Activated naive CD4-positive, alpha-beta T cell treated with anti-CD3 and anti-CD28 coated beads, Interleukin-2, amount 10 ng/mL, durations not matched to agents 7 days and 5 days (primary cell): ENCODE measurements at regions of chr9 and their contacts with region 1.

Region 1: GRCh38 chr9:5186416-5187169 is 1.2 kb upstream of the INSL6 start:
- DNase-seq: peak; percentile 77
- H3K4me3 Mint-ChIP-seq: no peak overlapping the region
- H3K27ac Mint-ChIP-seq: no peak overlapping the region
- H3K4me1 Mint-ChIP-seq: peaks cover 11% of the 10 kb centered on the region
- H3K27me3 Mint-ChIP-seq: peaks cover 9% of the 10 kb centered on the region

Region 2: GRCh38 chr9:4762108-4762885 is 424.3 kb before region 1 on chr9:
- CTCF ChIA-PET with region 1: interaction called, 22 read pairs
- DNase-seq: peak; percentile 91
- H3K4me3 Mint-ChIP-seq: peak overlapping the region; percentile 34
- H3K27ac Mint-ChIP-seq: peak overlapping the region; percentile 6
- H3K4me1 Mint-ChIP-seq: peaks cover 22% of the 10 kb centered on the region
- H3K27me3 Mint-ChIP-seq: peaks cover 34% of the 10 kb centered on the region

Region 3: DNA sequence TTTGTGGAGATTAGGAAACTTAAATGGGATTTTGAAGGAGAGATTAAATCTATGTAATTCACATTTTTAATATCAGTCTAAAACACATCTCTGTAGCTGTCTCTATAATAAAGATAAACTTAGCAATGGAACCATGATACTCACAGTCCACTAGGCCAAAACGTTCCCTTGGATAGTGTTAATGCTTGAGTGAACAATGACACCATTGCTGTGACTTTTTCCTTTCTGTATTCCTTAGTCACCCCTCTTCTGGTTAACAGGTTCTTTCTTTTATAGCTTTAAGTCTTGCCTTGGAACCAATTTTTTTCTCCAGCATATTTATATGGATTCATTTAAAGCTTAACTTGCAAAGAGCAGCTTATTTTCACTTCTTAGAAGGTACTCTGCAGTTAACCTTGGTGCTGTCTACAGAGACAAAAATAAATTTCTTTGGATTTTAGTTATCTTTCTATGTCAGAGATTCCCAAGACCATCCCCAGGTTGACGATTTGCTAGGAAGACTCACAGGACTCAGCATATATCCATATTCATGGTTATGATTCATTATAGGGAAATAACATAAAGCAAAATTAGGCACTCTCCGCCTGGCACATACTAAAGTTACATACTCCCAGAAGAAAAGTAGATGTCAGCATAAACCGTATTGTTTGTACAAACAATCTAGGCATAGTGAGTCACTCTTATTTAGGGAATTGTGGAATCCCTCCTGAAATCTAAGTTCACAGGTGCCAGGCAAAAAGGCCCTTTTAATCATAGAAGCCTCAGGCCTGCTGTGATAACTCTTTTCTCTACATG is 64.3 kb before region 1 on chr9:
- CTCF ChIA-PET with region 1: no interaction called
- DNase-seq: no peak
- H3K4me3 Mint-ChIP-seq: no peak overlapping the region
- H3K27ac Mint-ChIP-seq: no peak overlapping the region
- H3K4me1 Mint-ChIP-seq: no peaks in the 10 kb centered on the region
- H3K27me3 Mint-ChIP-seq: no peaks in the 10 kb centered on the region

Region 4: DNA sequence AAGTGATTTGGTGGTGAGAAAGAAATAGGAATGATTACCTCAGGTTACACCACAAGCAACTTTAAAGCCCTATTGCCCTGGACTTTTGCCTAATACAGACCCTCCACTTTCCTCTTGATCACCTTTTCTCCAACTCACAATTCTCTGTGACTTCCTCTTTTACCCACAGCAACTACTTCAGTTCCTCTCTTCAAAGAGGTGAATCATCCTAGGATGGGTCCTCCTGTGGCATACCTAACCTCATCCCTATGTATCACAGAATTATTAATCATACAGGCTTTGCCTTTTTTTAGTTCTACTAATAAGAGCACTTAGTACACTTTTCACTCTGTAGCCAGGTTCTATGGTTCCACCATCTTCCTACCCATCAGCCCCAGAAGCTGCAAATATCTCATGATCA is 18.5 kb after region 1 on chr9:
- CTCF ChIA-PET with region 1: no interaction called
- DNase-seq: no peak
- H3K4me3 Mint-ChIP-seq: no peak overlapping the region
- H3K27ac Mint-ChIP-seq: no peak overlapping the region
- H3K4me1 Mint-ChIP-seq: peaks cover 12% of the 10 kb centered on the region
- H3K27me3 Mint-ChIP-seq: peaks cover 4% of the 10 kb centered on the region

Region 5: GRCh38 chr9:5425006-5425628 is 238.5 kb after region 1 on chr9:
- CTCF ChIA-PET with region 1: interaction called, 52 read pairs
- DNase-seq: no peak
- H3K4me3 Mint-ChIP-seq: no peak overlapping the region
- H3K27ac Mint-ChIP-seq: no peak overlapping the region
- H3K4me1 Mint-ChIP-seq: no peaks in the 10 kb centered on the region
- H3K27me3 Mint-ChIP-seq: no peaks in the 10 kb centered on the region

Region 6: DNA sequence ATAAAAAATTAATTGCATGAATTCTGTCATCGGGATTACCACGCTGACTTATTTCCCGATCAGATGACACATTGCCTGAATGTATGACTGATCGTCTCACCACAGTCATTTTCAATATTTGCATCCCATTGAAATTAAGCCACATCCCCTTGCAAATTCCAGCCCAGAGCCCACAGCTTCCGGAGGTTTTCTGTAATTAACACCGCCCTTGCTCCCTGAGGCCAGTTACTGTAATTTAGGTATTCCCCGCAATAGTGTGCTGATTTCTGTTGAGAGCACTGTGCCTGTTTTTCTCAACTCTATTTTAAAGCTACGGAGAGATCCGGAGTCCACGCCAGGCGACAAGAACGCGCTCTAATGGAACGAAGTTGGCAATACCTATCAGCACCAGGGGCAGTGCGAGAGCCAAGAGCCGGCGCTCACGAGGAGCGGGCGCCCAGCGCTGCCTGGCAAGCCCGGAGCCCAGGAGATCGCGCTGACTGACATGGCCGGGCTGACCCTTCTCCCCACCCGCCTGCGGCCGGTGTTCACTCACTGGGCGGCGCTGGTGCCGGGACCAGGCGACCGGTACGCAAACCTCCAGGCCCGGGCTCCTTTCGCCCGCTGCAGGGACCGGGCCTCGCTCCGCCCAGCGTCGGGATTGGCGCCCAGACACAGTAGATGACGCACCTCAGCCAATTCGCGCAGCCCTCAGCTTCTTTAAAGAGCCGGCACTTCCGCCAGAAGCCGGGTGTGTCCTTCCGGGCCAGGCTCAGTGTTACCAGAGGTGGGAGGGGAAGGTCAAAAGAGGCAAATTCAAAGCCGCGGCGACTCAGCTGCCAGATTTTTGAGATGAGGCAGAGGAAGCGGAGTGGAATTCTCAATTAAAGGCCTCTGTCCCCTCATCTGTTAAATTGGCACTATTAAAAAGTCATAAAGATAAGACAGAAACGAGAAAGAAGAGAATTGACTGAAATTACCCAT is 250.9 kb after region 1 on chr9 and contains the start of gene PLGRKT:
- CTCF ChIA-PET with region 1: interaction called, 45 read pairs
- DNase-seq: peak; percentile 95
- H3K4me3 Mint-ChIP-seq: peak within 1 kb of the TSS; percentile 94
- H3K27ac Mint-ChIP-seq: peak within 1 kb of the TSS; percentile 97
- H3K4me1 Mint-ChIP-seq: peaks cover 38% of the 10 kb centered on the region
- H3K27me3 Mint-ChIP-seq: no peaks in the 10 kb centered on the region

Region 7: GRCh38 chr9:5582835-5583195 is 396.2 kb after region 1 on chr9:
- CTCF ChIA-PET with region 1: interaction called, 38 read pairs
- DNase-seq: peak; percentile 66
- H3K4me3 Mint-ChIP-seq: no peak overlapping the region
- H3K27ac Mint-ChIP-seq: peak overlapping the region; percentile 82
- H3K4me1 Mint-ChIP-seq: peaks cover 72% of the 10 kb centered on the region
- H3K27me3 Mint-ChIP-seq: no peaks in the 10 kb centered on the region

Region 8: DNA sequence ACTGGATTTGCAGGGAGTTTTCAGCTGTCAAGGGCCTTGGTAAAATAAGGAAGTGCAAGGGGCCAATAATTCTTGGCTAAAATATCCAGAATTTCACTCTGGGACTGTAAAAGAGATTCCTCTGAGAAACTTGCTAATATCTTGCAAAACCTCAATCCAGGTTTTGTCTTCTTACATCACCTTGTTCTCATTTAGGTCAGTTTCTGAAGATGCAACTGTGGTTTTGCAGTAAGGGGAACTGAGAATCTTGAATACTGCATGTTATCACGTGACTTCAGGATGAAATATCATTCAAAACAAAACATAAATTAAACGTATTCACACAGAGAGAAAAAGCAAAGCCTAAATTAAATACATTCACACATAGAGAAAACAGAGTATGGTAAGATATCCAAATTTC is 407.3 kb after region 1 on chr9:
- CTCF ChIA-PET with region 1: interaction called, 38 read pairs
- DNase-seq: no peak
- H3K4me3 Mint-ChIP-seq: no peak overlapping the region
- H3K27ac Mint-ChIP-seq: no peak overlapping the region
- H3K4me1 Mint-ChIP-seq: peaks cover 11% of the 10 kb centered on the region
- H3K27me3 Mint-ChIP-seq: no peaks in the 10 kb centered on the region